Brain microvascular endothelial cell (primary cell): ENCODE measurements at regions of chr17 and their contacts with region 1.

Region 1: GRCh38 chr17:42120770-42121769 is at the start of gene KAT2A:
- DNase-seq: peak; percentile 70
- H3K4me3 ChIP-seq: peak within 1 kb of the TSS; percentile 58
- H3K27ac ChIP-seq: no peak within 1 kb of the TSS
- H3K27me3 ChIP-seq: no peaks in the 10 kb centered on the region
- CTCF ChIP-seq: no peak

Region 2: GRCh38 chr17:41966463-41967140 is 154.5 kb before region 1 on chr17 and contains the start of gene CNP:
- in situ Hi-C with region 1: loop called (anchors 25 kb)
- DNase-seq: peak; percentile 82
- H3K4me3 ChIP-seq: peak within 1 kb of the TSS; percentile 81
- H3K27ac ChIP-seq: peak within 1 kb of the TSS; percentile 52
- H3K27me3 ChIP-seq: no peaks in the 10 kb centered on the region
- CTCF ChIP-seq: no peak

Region 3: GRCh38 chr17:42027961-42028790 is 92.9 kb before region 1 on chr17:
- in situ Hi-C with region 1: no loop called
- DNase-seq: no peak
- H3K4me3 ChIP-seq: no peak overlapping the region
- H3K27ac ChIP-seq: no peak overlapping the region
- H3K27me3 ChIP-seq: no peaks in the 10 kb centered on the region
- CTCF ChIP-seq: peak; percentile 46